PC-9 (cell line): ENCODE measurements at regions of chr11 and their contacts with region 1.

Region 1: GRCh38 chr11:119533921-119534736 is 111.2 kb upstream of the THY1 start:
- DNase-seq: peak; percentile 49 to 74
- H3K4me3 ChIP-seq: no peak overlapping the region
- H3K27ac ChIP-seq: no peak overlapping the region
- H3K4me1 ChIP-seq: no peaks in the 10 kb centered on the region
- H3K27me3 ChIP-seq: peaks cover 34% of the 10 kb centered on the region
- CTCF ChIP-seq: peak; percentile 99

Region 2: GRCh38 chr11:118449316-118449918 is 1084.7 kb before region 1 on chr11:
- CTCF ChIA-PET with region 1: no interaction called
- POLR2A ChIA-PET with region 1: no interaction called
- intact Hi-C with region 1: no loop called
- DNase-seq: no peak
- H3K4me3 ChIP-seq: no peak overlapping the region
- H3K27ac ChIP-seq: no peak overlapping the region
- H3K4me1 ChIP-seq: no peaks in the 10 kb centered on the region
- H3K27me3 ChIP-seq: no peaks in the 10 kb centered on the region
- CTCF ChIP-seq: no peak

Region 3: GRCh38 chr11:119051440-119052162 is 482.5 kb before region 1 on chr11:
- CTCF ChIA-PET with region 1: no interaction called
- POLR2A ChIA-PET with region 1: no interaction called
- intact Hi-C with region 1: no loop called
- DNase-seq: no peak
- H3K4me3 ChIP-seq: no peak overlapping the region
- H3K27ac ChIP-seq: no peak overlapping the region
- H3K4me1 ChIP-seq: peaks cover 8% of the 10 kb centered on the region
- H3K27me3 ChIP-seq: no peaks in the 10 kb centered on the region
- CTCF ChIP-seq: no peak

Region 4: DNA sequence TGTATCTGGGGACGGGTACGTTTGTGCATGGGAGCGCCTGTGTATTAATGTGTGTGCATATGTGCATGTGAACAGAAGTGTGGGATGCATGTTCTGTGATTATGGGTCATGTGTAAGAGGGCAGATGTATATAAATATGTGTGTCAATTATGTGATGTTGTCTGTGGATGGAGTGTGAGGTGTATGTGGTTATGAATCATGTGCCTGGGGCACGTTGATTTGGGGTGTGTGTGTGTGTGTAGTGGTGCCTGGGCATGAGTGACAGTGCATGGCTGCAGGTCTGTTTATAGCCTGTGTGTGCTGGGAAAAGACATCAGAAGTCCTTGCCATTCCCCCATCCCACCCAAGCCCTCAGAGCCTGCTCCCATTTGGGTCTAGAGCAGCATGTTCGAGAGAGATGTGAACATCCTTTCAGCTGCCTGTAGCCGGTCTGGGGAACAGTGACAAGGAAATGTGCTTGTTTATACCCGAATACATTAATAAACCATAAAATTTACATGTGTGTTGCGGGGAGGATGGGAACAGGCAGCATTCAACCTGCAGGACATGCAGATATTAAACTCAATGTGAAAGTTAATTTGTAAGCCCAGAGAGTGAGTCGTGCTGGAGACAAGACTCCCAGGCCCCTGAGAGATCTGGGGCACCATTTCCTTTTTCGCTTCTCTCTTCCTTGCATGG is 65.9 kb after region 1 on chr11:
- CTCF ChIA-PET with region 1: no interaction called
- POLR2A ChIA-PET with region 1: no interaction called
- intact Hi-C with region 1: loop called (anchors 10 kb)
- DNase-seq: no peak
- H3K4me3 ChIP-seq: no peak overlapping the region
- H3K27ac ChIP-seq: no peak overlapping the region
- H3K4me1 ChIP-seq: peaks cover 22% of the 10 kb centered on the region
- H3K27me3 ChIP-seq: no peaks in the 10 kb centered on the region
- CTCF ChIP-seq: no peak

Region 5: DNA sequence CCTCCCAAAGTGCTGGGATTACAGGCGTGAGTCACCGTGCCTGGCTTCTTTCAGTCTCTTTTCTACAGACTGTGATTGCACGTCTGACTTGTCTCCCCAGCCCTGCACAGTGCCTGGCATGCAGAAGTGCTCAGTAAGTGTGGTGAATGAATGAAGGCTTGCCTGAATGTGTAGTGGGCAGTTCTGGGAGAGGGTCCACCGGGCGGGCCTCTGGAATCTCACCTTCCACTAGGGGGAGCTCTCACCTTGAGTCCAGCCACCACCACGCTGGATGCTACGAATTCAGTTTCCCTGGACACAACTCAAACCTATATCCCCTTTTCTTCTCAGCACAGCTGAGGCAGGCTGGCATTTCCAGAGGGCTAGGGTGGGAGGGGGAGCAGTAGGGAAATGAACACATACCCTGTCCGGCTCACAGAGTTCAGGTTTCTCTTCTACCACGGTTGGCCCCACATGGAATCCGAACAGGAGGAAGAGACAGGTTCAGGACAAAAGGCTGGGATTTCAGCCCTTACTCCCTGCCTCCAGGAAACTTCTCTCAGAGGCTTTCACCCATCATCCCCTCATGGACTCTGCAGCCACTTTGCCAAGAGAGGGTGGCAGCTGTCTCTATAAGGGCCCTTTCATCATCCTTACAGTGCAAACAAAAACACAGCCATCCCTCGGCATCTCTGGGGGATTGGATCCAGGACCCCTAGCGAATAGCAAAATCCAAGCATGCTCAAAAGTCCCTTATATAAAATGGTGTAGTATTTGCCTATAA is 108.0 kb after region 1 on chr11:
- CTCF ChIA-PET with region 1: no interaction called
- POLR2A ChIA-PET with region 1: no interaction called
- intact Hi-C with region 1: loop called (anchors 5 kb)
- DNase-seq: peak in 1 of 2 experiments; percentile 8
- H3K4me3 ChIP-seq: no peak overlapping the region
- H3K27ac ChIP-seq: no peak overlapping the region
- H3K4me1 ChIP-seq: no peaks in the 10 kb centered on the region
- H3K27me3 ChIP-seq: 0 out of 2 replicates have a peak, but pooled peaks cover 6% of the 10 kb centered on the region
- CTCF ChIP-seq: peak; percentile 90

Region 6: GRCh38 chr11:119666463-119667131 is 132.5 kb after region 1 on chr11:
- CTCF ChIA-PET with region 1: interaction called, 15 read pairs
- POLR2A ChIA-PET with region 1: no interaction called
- intact Hi-C with region 1: no loop called
- DNase-seq: peak; percentile 71 to 83
- H3K4me3 ChIP-seq: no peak overlapping the region
- H3K27ac ChIP-seq: no peak overlapping the region
- H3K4me1 ChIP-seq: no peaks in the 10 kb centered on the region
- H3K27me3 ChIP-seq: no peaks in the 10 kb centered on the region
- CTCF ChIP-seq: peak; percentile 98